ENCODE measurements at regions of chr5 and their contacts with region 1.

Region 1: GRCh38 chr5:119373449-119373858 is 17.6 kb downstream of the TNFAIP8 start:
- DNase-seq: no peak
- H3K4me3 ChIP-seq: no peak overlapping the region
- H3K27ac ChIP-seq: no peak overlapping the region
- H3K4me1 ChIP-seq: peaks cover 5% of the 10 kb centered on the region
- CTCF ChIP-seq: no peak

Region 2: DNA sequence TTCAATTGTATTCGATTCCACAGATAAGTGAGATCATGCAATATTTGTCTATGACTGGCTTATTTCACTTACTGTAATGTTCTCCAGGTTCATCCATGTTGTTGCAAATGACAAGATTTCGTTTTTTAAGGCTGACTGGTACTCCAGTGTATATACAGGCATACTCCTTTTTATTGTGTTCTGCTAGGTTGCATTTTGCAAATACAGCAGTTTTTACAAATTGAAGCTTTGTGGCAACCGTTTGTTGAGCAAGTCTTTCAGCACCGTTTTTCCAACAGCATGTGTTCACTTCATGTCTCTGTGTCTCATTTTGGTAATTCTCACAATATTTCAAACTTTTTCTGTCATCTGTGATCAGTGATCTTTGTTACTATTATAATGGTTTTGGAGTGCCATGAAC is 219.8 kb before region 1 on chr5:
- CTCF ChIA-PET with region 1: no interaction called
- POLR2A ChIA-PET with region 1: no interaction called
- intact Hi-C with region 1: no loop called
- DNase-seq: no peak
- H3K4me3 ChIP-seq: no peak overlapping the region
- H3K27ac ChIP-seq: no peak overlapping the region
- H3K4me1 ChIP-seq: no peaks in the 10 kb centered on the region
- CTCF ChIP-seq: no peak

Region 3: DNA sequence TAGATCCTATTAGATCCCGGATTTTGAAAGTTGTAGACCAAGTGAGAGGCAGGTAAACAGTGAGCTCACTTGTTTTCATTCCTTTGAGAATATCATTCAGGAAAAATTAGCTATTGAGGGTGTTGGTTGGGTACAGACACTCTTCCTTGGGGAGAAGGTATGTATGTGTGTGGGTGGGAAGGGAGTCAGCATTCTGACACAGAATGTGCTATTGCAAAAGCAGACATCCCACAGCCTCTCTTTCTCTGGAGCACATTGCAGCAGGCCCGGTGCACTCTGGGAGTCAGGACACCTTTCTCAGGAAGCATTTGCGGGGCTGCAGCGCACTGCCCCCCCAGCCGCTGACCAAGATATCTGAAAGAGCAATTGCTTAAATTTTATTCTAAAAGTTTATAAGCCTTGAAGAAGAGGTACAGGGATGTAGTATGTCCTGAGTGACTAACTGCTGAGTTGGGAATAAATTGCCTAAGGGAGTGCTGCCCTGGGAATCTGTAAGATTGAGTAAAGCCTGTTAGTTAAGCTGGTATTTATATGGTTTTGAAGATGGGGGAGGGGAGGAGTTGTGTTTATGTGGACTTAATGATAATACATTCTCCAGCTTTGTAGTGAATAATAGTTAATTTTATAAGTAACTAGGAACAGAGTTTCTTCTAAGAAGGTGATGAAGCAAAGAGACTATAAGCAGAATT is 12.4 kb before region 1 on chr5:
- CTCF ChIA-PET with region 1: interaction called, 3 read pairs
- POLR2A ChIA-PET with region 1: interaction called, 15 read pairs
- intact Hi-C with region 1: no loop called
- DNase-seq: no peak
- H3K4me3 ChIP-seq: no peak overlapping the region
- H3K27ac ChIP-seq: no peak overlapping the region
- H3K4me1 ChIP-seq: peaks cover 63% of the 10 kb centered on the region
- CTCF ChIP-seq: no peak

Region 4: DNA sequence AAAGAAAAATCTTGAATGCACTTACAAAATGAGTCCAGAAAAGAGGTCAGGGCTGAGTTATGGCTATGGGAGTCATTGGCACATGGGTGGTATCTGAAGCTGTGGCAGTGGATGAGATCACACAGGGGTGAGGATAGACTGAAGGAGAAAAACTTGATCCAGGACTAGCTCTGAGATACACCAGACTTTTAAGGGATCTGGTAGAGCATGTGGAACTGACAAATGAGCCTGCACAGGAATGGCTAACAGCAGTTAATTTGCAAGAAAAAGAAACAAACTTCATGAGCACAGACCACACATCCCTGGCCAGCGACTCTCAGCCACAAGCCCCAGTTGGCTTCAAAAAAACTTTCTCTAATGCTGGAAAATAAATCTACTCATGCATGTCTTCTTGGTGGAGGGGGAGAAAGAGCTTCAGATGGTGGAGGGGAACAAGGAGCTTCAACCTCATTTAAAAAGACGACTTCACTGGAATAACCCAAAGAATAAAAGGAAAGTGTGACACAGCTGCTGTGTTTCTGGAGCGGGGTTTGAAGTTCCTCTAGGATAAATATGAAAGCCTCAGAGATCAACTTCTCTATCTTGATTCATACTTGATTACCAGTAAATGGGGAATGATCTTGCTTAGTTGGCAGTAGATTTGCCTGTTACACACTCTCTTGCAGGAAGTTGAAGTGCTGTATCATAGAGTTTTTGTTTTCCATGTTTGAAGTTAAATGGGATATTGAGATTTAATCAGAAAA is 16.0 kb after region 1 on chr5:
- CTCF ChIA-PET with region 1: no interaction called
- POLR2A ChIA-PET with region 1: interaction called, 11 read pairs
- intact Hi-C with region 1: no loop called
- DNase-seq: no peak
- H3K4me3 ChIP-seq: peak overlapping the region; percentile 17
- H3K27ac ChIP-seq: peak overlapping the region; percentile 67
- H3K4me1 ChIP-seq: peaks cover 87% of the 10 kb centered on the region
- CTCF ChIP-seq: no peak